Posterior vena cava (tissue), 2 donors: ENCODE measurements at regions of chr13 and their contacts with region 1.

Region 1: GRCh38 chr13:71096421-71096820 is 770.6 kb downstream of the DACH1 start:
- DNase-seq: no peak

Region 2: DNA sequence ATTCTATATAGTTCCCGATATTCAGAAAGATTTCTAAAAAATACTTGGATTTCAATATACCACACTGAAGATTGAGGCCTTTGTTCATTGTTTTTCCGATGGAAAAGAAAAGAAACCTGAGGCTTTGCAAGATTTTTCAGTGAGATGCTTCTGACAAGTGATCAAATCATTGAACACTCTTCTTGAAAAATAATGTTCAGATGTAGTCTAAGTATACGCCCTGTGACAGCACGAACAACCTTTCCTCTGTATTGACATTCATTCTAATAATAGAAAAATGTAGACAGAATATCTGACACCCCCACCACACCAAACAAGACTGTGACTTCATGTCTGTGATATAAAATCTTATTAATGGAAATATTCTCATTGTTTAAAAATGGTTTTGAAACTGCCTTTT is 337.5 kb before region 1 on chr13:
- intact Hi-C with region 1: no loop called
- DNase-seq: no peak

Region 3: GRCh38 chr13:71079638-71080037 is 16.8 kb before region 1 on chr13:
- intact Hi-C with region 1: no loop called
- DNase-seq: no peak

Region 4: GRCh38 chr13:71118779-71119364 is 22.5 kb after region 1 on chr13:
- intact Hi-C with region 1: loop called in 1 of 2 experiments (anchors 1 kb)
- DNase-seq: no peak